ENCODE measurements at regions of chr18 and their contacts with region 1.

Region 1: GRCh38 chr18:25351777-25352628 is at the start of gene ZNF521:
- DNase-seq: peak; percentile 85 to 89 (median 87)
- H3K4me3 ChIP-seq: peak within 1 kb of the TSS; percentile 78
- H3K27ac ChIP-seq: peak within 1 kb of the TSS; percentile 98
- H3K4me1 ChIP-seq: no peaks in the 10 kb centered on the region
- H3K27me3 ChIP-seq: no peaks in the 10 kb centered on the region
- CTCF ChIP-seq: peak in 1 of 3 donors; percentile 22
- EP300 ChIP-seq: no peak
- POLR2A ChIP-seq: peak; percentile 56
- total RNA-seq, gene ZNF521: 38.7 to 51.3 (median 44.5) TPM

Region 2: GRCh38 chr18:25230658-25231326 is 121.2 kb before region 1 on chr18:
- intact Hi-C with region 1: loop called in 3 of 4 experiments (anchors 2 to 10 kb)
- DNase-seq: peak; percentile 76 to 87 (median 83)
- H3K4me3 ChIP-seq: peak overlapping the region; percentile 10
- H3K27ac ChIP-seq: peak overlapping the region in 1 of 2 donors; percentile 72
- H3K4me1 ChIP-seq: peaks cover 9% of the 10 kb centered on the region
- H3K27me3 ChIP-seq: no peaks in the 10 kb centered on the region
- CTCF ChIP-seq: no peak
- EP300 ChIP-seq: no peak
- POLR2A ChIP-seq: no peak

Region 3: GRCh38 chr18:25544546-25545287 is 192.7 kb after region 1 on chr18:
- intact Hi-C with region 1: no loop called
- DNase-seq: no peak
- H3K4me3 ChIP-seq: no peak overlapping the region
- H3K27ac ChIP-seq: no peak overlapping the region
- H3K4me1 ChIP-seq: no peaks in the 10 kb centered on the region
- H3K27me3 ChIP-seq: no peaks in the 10 kb centered on the region
- CTCF ChIP-seq: no peak
- EP300 ChIP-seq: no peak
- POLR2A ChIP-seq: no peak

Region 4: GRCh38 chr18:25946540-25946939 is 594.5 kb after region 1 on chr18:
- intact Hi-C with region 1: no loop called
- DNase-seq: no peak
- H3K4me3 ChIP-seq: no peak overlapping the region
- H3K27ac ChIP-seq: no peak overlapping the region
- H3K4me1 ChIP-seq: no peaks in the 10 kb centered on the region
- H3K27me3 ChIP-seq: no peaks in the 10 kb centered on the region
- CTCF ChIP-seq: no peak
- EP300 ChIP-seq: no peak
- POLR2A ChIP-seq: no peak